ENCODE measurements at regions of chr14 and their contacts with region 1.

Region 1: DNA sequence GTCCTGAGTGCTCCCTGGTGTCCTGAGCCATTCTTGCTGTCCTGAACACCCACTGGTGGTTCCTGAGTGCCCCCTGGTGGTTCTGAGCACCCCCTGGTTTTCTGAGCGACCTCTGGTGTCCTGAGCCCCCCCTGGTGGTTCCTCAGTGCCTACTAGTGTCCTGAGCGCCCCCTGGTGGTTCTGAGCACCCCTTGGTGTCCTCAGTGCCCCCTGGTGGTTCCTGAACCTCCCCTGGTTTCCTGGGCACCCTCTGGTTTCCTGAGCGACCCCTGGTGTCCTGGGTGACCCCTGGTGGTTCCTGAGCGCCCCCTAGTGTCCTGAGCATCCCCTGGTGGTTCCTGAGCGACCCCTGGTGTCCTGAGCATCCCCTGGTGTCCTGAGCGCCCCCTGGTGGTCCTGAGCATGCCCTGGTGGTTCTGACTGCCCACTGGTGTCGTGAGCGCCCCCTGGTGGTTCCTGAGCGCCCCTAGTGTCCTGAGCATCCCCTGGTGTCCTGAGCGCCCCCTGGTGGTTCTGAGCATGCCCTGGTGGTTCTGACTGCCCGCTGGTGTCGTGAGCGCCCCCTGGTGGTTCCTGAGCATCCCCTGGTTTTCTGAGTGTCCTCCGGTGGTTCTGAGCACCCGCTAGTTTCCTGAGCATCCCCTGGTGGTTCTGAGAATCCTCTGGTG is 473.1 kb downstream of the TMEM121 start:
- DNase-seq: peak; percentile 96
- H3K4me3 Mint-ChIP-seq: peak overlapping the region; percentile 21
- H3K27ac Mint-ChIP-seq: peak overlapping the region; percentile 70
- H3K4me1 Mint-ChIP-seq: peaks cover 42% of the 10 kb centered on the region
- H3K27me3 Mint-ChIP-seq: no peaks in the 10 kb centered on the region

Region 2: GRCh38 chr14:105100931-105101330 is 898.6 kb before region 1 on chr14:
- intact Hi-C with region 1: no loop called
- DNase-seq: no peak
- H3K4me3 Mint-ChIP-seq: no peak overlapping the region
- H3K27ac Mint-ChIP-seq: no peak overlapping the region
- H3K4me1 Mint-ChIP-seq: peaks cover 3% of the 10 kb centered on the region
- H3K27me3 Mint-ChIP-seq: peaks cover 31% of the 10 kb centered on the region

Region 3: GRCh38 chr14:105682940-105683570 is 316.4 kb before region 1 on chr14:
- intact Hi-C with region 1: loop called (anchors 5 kb)
- DNase-seq: no peak
- H3K4me3 Mint-ChIP-seq: no peak overlapping the region
- H3K27ac Mint-ChIP-seq: peak overlapping the region; percentile 71
- H3K4me1 Mint-ChIP-seq: peaks cover 4% of the 10 kb centered on the region
- H3K27me3 Mint-ChIP-seq: no peaks in the 10 kb centered on the region

Region 4: DNA sequence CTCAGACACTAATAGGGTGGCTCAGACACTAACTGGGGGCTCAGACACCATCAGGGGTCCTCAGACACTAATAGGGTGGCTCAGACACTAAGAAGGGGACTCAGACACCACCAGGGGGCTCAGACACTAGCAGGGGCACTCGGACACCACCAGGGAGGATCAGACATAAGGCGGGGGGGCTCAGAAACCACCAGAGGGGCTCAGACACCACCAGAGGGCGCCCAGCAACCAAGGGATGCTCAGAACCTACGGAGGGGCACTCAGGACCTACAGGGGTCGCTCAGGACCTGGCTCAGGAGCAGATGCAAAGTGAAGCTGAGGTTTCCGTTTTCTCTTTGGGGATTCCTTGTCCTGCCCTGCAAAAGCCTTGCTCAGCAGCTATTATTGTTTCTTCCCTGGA is 24.6 kb before region 1 on chr14:
- intact Hi-C with region 1: loop called (anchors 2 kb)
- DNase-seq: peak; percentile 85
- H3K4me3 Mint-ChIP-seq: no peak overlapping the region
- H3K27ac Mint-ChIP-seq: no peak overlapping the region
- H3K4me1 Mint-ChIP-seq: peaks cover 3% of the 10 kb centered on the region
- H3K27me3 Mint-ChIP-seq: peaks cover 10% of the 10 kb centered on the region

Region 5: DNA sequence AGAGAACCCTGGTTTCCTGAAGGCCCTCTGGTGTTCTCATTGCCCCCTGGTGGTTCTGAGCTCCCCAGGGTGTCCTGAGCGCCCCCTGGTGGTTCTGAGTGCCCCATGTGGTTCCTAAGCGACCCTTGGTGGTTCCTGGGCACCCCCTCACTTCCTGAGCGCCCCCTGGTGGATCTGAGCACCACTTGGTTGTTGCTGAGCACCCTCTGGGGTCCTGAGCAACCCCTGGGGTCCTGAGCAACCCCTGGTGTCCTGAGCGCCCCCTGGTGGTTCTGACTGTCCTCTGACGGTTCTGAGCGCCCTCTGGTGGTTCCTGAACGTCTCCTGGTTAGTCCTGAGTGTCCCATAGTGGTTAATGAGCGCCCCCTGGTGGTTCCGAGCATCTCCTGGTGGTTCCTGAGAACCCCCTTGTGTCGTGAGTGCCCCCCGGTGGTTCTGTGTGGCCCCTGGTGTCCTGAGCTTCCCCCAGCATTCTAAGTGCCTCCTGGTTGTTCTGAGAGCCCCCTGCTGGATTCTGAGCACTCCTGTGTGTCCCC is 95.2 kb after region 1 on chr14:
- intact Hi-C with region 1: no loop called
- DNase-seq: peak; percentile 94
- H3K4me3 Mint-ChIP-seq: no peak overlapping the region
- H3K27ac Mint-ChIP-seq: no peak overlapping the region
- H3K4me1 Mint-ChIP-seq: no peaks in the 10 kb centered on the region
- H3K27me3 Mint-ChIP-seq: peaks cover 25% of the 10 kb centered on the region

Region 6: GRCh38 chr14:106380740-106381139 is 381.2 kb after region 1 on chr14:
- intact Hi-C with region 1: no loop called
- DNase-seq: no peak
- H3K4me3 Mint-ChIP-seq: no peak overlapping the region
- H3K27ac Mint-ChIP-seq: no peak overlapping the region
- H3K4me1 Mint-ChIP-seq: peaks cover 2% of the 10 kb centered on the region
- H3K27me3 Mint-ChIP-seq: peaks cover 2% of the 10 kb centered on the region